Activated CD4-positive, alpha-beta memory T cell treated with anti-CD3 and anti-CD28 coated beads, Interleukin-2, amount 10 ng/mL, durations not matched to agents 7 days and 5 days (primary cell): ENCODE measurements at regions of chr14 and their contacts with region 1.

Region 1: DNA sequence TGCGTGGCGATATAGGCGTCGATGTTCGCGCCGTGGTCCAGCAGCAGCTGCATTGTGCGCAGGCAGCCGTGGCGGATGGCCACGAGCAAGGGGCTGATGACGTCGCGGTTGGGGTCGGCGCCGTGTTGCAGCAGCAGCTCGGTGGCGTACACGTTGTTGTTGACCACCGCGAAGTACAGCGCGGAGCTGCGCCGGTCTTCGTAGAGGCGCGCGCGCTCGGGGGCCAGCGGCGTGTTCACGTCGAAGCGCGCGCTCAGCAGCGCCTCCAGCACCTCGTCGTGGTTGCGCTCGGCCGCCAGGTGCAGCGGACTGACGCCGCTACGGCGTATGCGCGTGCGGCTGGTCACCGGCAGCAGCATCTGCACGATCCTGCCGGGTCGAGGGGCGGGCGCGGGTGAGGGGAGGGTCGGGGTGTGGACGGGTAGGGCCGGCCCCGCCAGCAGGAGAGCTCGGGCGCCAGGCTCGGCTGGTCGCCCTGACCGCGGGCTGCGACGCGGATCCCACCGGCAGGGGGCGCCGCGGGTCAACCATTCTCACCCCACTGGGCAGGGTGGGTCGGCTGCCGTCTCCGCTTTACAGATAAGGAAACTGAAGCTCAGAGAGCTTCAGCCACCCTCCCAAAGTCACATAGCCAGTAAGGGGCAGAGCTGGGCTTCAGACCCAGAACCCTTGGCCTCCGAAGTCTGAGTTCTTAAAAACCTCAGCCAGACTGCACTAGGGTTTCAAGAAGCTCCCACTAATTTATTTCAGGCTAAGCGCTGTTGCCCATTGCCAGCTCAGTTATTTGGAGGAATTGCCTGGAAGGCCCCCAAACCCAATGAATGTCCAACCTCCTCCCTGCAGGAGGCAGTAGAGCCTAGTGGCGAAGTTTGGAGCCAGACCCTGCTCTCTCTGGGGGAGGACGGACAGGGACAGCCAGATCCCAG is 12.4 kb downstream of the FAM181A start:
- DNase-seq: peak; percentile 92
- H3K4me3 Mint-ChIP-seq: peak overlapping the region; percentile 52
- H3K27ac Mint-ChIP-seq: peak overlapping the region; percentile 68
- H3K4me1 Mint-ChIP-seq: peaks cover 36% of the 10 kb centered on the region
- H3K27me3 Mint-ChIP-seq: no peaks in the 10 kb centered on the region

Region 2: DNA sequence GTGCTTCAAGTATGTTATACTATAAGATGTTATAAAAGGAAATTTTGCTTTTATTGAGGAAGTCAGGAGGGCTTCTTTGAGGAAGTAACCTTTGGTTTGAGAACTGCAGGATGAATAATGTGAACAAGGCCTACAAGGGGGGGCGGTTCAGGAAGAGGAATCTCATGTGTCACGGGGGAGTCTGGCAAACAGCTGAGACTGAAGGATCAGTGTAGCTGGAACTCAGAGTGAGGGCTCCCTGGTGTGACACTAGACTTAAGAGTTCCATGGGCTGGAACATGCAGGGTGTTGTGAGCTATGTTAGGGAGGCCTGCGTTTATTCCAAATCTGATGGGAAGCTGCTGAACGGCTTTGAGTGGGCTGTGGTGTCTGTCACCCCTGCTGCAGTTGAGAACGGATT is 446.5 kb before region 1 on chr14:
- CTCF ChIA-PET with region 1: no interaction called
- POLR2A ChIA-PET with region 1: no interaction called
- DNase-seq: no peak
- H3K4me3 Mint-ChIP-seq: no peak overlapping the region
- H3K27ac Mint-ChIP-seq: no peak overlapping the region
- H3K4me1 Mint-ChIP-seq: no peaks in the 10 kb centered on the region
- H3K27me3 Mint-ChIP-seq: no peaks in the 10 kb centered on the region

Region 3: DNA sequence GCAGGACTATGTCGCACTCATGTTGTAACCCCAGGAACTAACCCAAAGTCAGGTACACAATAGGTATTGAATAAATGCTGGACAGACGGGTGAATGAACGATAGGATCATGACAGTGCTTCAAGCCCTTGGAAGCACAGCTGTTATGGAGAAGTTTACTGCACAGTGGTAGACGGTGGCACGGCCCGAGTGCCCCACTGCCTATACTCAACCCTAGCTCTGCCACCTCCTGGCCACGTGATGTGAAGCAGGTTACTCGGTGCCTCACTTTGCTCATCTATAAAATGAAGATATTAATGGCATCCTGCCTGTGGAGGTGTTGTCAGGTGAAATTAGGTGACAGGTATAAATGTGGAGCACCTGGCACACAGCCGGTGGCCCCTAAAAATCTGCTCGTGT is 31.0 kb after region 1 on chr14:
- CTCF ChIA-PET with region 1: interaction called, 354 read pairs
- POLR2A ChIA-PET with region 1: interaction called, 79 read pairs
- DNase-seq: peak; percentile 80
- H3K4me3 Mint-ChIP-seq: peak overlapping the region; percentile 80
- H3K27ac Mint-ChIP-seq: peak overlapping the region; percentile 94
- H3K4me1 Mint-ChIP-seq: peaks cover 89% of the 10 kb centered on the region
- H3K27me3 Mint-ChIP-seq: no peaks in the 10 kb centered on the region

Region 4: GRCh38 chr14:93994919-93995682 is 55.5 kb after region 1 on chr14:
- CTCF ChIA-PET with region 1: interaction called, 300 read pairs
- POLR2A ChIA-PET with region 1: interaction called, 63 read pairs
- DNase-seq: peak; percentile 56
- H3K4me3 Mint-ChIP-seq: no peak overlapping the region
- H3K27ac Mint-ChIP-seq: no peak overlapping the region
- H3K4me1 Mint-ChIP-seq: peaks cover 35% of the 10 kb centered on the region
- H3K27me3 Mint-ChIP-seq: no peaks in the 10 kb centered on the region

Region 5: DNA sequence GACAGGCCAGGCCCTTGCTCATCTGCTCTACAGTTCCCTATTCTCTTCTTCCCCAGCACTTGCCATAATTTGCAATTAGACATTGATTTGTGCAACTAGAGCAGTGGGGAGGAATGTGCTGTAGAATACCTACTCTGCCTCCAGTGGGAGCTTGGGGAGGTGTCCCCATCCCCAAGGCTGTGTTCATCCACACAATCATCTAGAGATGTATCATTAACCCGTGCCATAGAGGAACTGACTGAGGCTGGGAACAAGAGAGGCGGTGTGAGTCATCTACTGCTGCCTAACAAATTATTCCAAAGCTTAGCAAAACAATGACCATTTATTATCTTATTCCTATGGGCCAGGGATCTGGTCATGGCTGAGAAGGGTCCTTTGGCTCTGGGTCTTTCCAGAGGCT is 81.4 kb after region 1 on chr14:
- CTCF ChIA-PET with region 1: interaction called, 77 read pairs
- POLR2A ChIA-PET with region 1: interaction called, 4 read pairs
- DNase-seq: no peak
- H3K4me3 Mint-ChIP-seq: no peak overlapping the region
- H3K27ac Mint-ChIP-seq: peak overlapping the region; percentile 78
- H3K4me1 Mint-ChIP-seq: peaks cover 53% of the 10 kb centered on the region
- H3K27me3 Mint-ChIP-seq: peaks cover 3% of the 10 kb centered on the region

Region 6: DNA sequence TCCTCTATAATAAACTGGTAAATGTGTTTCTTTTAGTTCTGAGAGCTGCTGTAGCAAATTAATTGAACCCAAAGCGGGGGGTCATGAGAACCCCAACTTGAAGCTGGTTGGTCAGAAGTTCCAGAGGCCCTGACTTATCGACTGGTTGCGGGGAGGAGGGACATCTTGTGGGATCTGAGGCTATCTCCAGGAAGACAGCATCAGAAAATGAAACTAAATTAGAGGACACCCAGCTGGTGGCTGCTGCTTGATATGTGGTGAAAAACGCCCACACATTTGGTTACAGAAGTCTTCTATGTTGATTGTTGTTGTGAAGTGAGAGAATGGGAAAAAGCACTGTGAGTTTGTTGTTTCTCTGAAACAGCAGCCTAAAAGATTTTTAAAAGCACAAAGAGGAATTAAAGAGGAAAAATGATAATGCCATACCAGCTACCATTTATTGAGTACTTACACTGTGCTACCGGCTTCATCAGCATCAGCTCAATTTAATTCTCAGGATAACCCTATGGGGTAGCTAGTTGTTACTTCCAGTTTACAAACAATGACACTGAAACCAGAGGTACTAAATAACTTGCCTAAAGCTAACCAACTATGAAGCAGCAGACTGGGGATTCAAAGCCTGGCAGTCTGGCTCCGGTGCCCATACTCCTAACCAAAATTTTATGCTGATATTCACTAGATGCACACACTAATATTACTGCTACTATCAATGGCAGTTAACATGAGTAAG is 117.2 kb after region 1 on chr14:
- CTCF ChIA-PET with region 1: interaction called, 21 read pairs
- POLR2A ChIA-PET with region 1: no interaction called
- DNase-seq: peak; percentile 56
- H3K4me3 Mint-ChIP-seq: peak overlapping the region; percentile 7
- H3K27ac Mint-ChIP-seq: peak overlapping the region; percentile 83
- H3K4me1 Mint-ChIP-seq: peaks cover 65% of the 10 kb centered on the region
- H3K27me3 Mint-ChIP-seq: no peaks in the 10 kb centered on the region

Region 7: DNA sequence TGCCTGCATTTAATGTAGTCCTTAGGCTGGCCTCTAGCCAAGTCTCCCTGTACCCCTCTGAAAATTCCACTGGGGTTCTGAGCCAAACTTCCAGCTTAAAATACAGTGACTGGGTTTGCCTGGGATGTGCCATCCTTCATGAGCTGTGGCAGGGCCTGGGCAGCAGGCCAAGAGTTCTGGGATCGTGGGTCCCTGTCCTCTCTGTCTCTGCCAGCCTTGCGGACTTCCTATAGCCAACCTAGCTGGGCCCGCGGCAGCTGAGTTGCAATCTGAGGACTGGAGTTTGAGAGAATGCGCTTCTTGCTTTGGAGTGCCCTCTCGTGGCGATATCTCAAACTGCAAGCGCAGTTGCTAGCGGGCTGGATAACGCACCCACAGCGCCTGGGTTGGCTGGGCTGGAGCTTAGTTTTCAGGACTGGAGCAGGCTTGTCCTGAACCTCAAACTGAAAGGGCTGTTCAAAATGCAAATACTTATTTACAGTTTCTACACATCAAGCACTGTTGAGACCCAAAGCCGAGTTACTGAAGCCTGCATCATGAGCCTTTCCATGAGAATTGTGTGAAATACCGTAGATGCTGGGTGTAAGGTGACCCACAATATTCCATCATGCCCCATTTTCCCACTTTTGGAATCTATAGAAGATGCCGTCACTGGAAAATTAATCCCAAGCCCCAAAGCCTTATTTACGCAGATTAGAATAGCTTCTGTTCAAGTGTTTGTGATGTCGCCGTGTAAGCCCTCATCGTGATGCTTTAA is 197.2 kb after region 1 on chr14:
- CTCF ChIA-PET with region 1: interaction called, 29 read pairs
- POLR2A ChIA-PET with region 1: interaction called, 3 read pairs
- DNase-seq: peak; percentile 89
- H3K4me3 Mint-ChIP-seq: no peak overlapping the region
- H3K27ac Mint-ChIP-seq: no peak overlapping the region
- H3K4me1 Mint-ChIP-seq: peaks cover 15% of the 10 kb centered on the region
- H3K27me3 Mint-ChIP-seq: peaks cover 21% of the 10 kb centered on the region